Activated CD4-positive, alpha-beta T cell treated with anti-CD3 and anti-CD28 coated beads, Interleukin-2, amount 10 ng/mL, durations not matched to agents 24 days and 14 days (primary cell): ENCODE measurements at regions of chr9 and their contacts with region 1.

Region 1: DNA sequence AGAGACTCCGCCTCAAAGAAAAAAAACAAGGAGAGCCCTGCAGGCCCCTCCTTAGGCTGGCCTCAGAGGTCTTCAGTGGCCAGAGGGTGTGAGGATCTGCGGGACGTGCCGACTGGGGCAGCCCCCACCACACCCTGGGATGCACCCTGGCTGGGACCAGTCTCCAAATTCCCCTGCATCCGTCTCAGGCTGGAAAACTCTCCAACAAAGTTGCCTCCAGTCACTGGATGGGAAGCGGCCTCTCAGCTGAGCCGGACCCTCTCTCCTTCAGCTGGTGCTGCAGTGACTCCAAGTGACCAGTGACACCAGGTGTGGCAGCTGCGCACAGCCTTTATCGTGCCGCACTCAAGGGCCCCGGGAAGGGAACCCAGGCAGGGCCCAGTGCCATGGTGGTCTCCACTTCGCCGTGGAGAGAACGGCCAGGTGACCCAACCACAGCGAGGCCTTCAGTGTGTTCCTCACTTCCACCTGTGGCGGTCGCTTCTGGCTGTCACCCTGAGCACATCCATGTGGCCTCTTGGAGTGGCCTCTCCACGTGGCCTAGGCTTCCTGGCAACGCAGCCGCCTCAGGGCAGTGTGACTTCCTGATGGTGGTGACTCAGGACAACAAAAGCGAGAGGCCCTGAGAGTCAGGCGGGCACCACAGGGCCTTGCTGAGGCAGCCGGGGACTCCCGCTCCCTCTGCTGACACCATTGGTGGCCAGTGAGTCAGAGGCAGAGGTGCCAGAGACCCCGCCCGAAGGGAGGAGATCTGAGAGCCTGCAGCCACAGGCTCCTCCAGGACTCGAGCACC is 19.3 kb upstream of the CAMSAP1 start:
- DNase-seq: peak; percentile 88
- H3K4me3 Mint-ChIP-seq: no peak overlapping the region
- H3K27ac Mint-ChIP-seq: peak overlapping the region; percentile 94
- H3K4me1 Mint-ChIP-seq: peaks cover 32% of the 10 kb centered on the region
- H3K27me3 Mint-ChIP-seq: no peaks in the 10 kb centered on the region

Region 2: DNA sequence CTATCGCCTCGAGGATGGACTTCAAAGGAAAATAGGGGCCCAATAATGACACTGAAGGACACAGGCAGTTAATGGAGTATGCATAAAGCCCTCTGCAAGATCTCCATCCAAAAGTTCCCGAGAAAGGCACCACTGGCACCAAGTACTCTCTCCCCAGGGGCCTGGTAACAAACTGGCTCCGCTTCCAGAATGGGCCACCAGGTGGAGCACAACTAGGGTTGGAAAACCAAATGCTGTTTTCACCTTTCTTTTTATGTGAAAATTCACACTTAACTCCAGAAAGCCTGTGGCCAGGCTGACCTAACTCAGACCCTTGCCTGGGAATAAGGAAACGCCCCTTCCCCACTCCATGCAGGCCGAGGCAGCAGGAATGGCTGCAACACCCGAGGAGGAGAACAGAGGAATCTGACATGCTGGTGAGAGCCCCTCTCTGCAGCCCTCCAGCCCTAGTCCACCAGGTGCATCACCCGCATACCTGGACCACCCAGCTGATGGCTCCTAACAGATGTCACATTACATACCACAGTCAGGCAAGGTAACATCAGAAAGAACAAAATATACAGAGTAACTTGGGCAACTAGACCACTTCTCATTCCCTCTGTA is 62.0 kb before region 1 on chr9:
- intact Hi-C with region 1: loop called (anchors 2 kb)
- DNase-seq: peak; percentile 91
- H3K4me3 Mint-ChIP-seq: no peak overlapping the region
- H3K27ac Mint-ChIP-seq: no peak overlapping the region
- H3K4me1 Mint-ChIP-seq: peaks cover 6% of the 10 kb centered on the region
- H3K27me3 Mint-ChIP-seq: no peaks in the 10 kb centered on the region

Region 3: GRCh38 chr9:135887585-135888050 is 39.0 kb before region 1 on chr9:
- intact Hi-C with region 1: loop called (anchors 1 kb)
- DNase-seq: peak; percentile 87
- H3K4me3 Mint-ChIP-seq: peak overlapping the region; percentile 69
- H3K27ac Mint-ChIP-seq: peak overlapping the region; percentile 63
- H3K4me1 Mint-ChIP-seq: peaks cover 41% of the 10 kb centered on the region
- H3K27me3 Mint-ChIP-seq: no peaks in the 10 kb centered on the region

Region 4: GRCh38 chr9:135907431-135908092 is 19.0 kb before region 1 on chr9 and contains the start of gene CAMSAP1:
- intact Hi-C with region 1: loop called (anchors 1 kb)
- DNase-seq: peak; percentile 98
- H3K4me3 Mint-ChIP-seq: peak within 1 kb of the TSS; percentile 84
- H3K27ac Mint-ChIP-seq: peak within 1 kb of the TSS; percentile 80
- H3K4me1 Mint-ChIP-seq: peaks cover 35% of the 10 kb centered on the region
- H3K27me3 Mint-ChIP-seq: no peaks in the 10 kb centered on the region
- total RNA-seq, gene CAMSAP1: 45.2 and 49.9 TPM in 2 replicates

Region 5: GRCh38 chr9:135961277-135961705 is 34.7 kb after region 1 on chr9 and contains the start of gene UBAC1:
- intact Hi-C with region 1: loop called (anchors 1 kb)
- DNase-seq: peak; percentile 99
- H3K4me3 Mint-ChIP-seq: peak within 1 kb of the TSS; percentile 93
- H3K27ac Mint-ChIP-seq: peak within 1 kb of the TSS; percentile 85
- H3K4me1 Mint-ChIP-seq: peaks cover 32% of the 10 kb centered on the region
- H3K27me3 Mint-ChIP-seq: peaks cover 5% of the 10 kb centered on the region
- total RNA-seq, gene UBAC1: 43.2 and 47.7 TPM in 2 replicates